T-cell (primary cell): ENCODE measurements at regions of chr1 and their contacts with region 1.

Region 1: DNA sequence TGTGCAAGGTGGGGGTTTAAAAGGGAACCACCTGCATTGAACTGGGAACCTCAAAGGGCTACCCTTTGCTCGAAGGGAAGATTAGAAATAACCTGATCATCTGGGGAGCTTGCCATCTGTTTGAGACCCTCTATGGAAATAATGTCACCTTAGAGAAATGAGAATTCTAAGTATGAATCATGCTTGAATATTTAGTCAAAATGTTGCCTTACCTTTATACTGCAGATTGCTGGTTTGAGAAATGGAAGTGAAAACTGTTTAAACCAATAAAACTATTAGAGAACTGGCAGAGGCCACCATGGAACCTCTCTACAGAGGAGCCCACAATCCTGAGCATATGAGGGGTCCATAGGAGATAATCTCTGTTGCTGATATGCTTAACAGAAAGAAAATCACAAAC is 131.2 kb upstream of the FAM78B start:
- DNase-seq: no peak
- ATAC-seq: no peak
- H3K4me3 ChIP-seq: no peak overlapping the region
- H3K4me3 Mint-ChIP-seq: no peak overlapping the region
- H3K27ac ChIP-seq: no peak overlapping the region
- H3K27ac Mint-ChIP-seq: no peak overlapping the region
- H3K4me1 ChIP-seq: no peaks in the 10 kb centered on the region
- H3K4me1 Mint-ChIP-seq: no peaks in the 10 kb centered on the region
- H3K27me3 ChIP-seq: no peaks in the 10 kb centered on the region
- H3K27me3 Mint-ChIP-seq: no peaks in the 10 kb centered on the region

Region 2: GRCh38 chr1:166410083-166410385 is 112.0 kb after region 1 on chr1:
- CTCF ChIA-PET with region 1: interaction called in 1 of 2 experiments, 10 read pairs
- POLR2A ChIA-PET with region 1: no interaction called
- DNase-seq: no peak
- ATAC-seq: no peak
- H3K4me3 ChIP-seq: no peak overlapping the region
- H3K4me3 Mint-ChIP-seq: no peak overlapping the region
- H3K27ac ChIP-seq: no peak overlapping the region
- H3K27ac Mint-ChIP-seq: no peak overlapping the region
- H3K4me1 ChIP-seq: no peaks in the 10 kb centered on the region
- H3K4me1 Mint-ChIP-seq: no peaks in the 10 kb centered on the region
- H3K27me3 ChIP-seq: peaks cover 0 to 5% of the 10 kb centered on the region in 2 experiments
- H3K27me3 Mint-ChIP-seq: peaks cover 0 to 7% of the 10 kb centered on the region in 2 donors